ENCODE measurements at regions of chr1 and their contacts with region 1.

Region 1: GRCh38 chr1:54081306-54082270 is 28.2 kb downstream of the TCEANC2 start:
- DNase-seq: peak; percentile 33
- H3K4me3 Mint-ChIP-seq: no peak overlapping the region
- H3K27ac Mint-ChIP-seq: no peak overlapping the region
- H3K4me1 Mint-ChIP-seq: peaks cover 11% of the 10 kb centered on the region
- H3K27me3 Mint-ChIP-seq: no peaks in the 10 kb centered on the region

Region 2: GRCh38 chr1:53860967-53861411 is 220.6 kb before region 1 on chr1:
- intact Hi-C with region 1: loop called (anchors 1 kb)
- DNase-seq: peak; percentile 18
- H3K4me3 Mint-ChIP-seq: no peak overlapping the region
- H3K27ac Mint-ChIP-seq: no peak overlapping the region
- H3K4me1 Mint-ChIP-seq: no peaks in the 10 kb centered on the region
- H3K27me3 Mint-ChIP-seq: no peaks in the 10 kb centered on the region

Region 3: GRCh38 chr1:54070171-54070837 is 11.3 kb before region 1 on chr1:
- intact Hi-C with region 1: loop called (anchors 1 kb)
- DNase-seq: no peak
- H3K4me3 Mint-ChIP-seq: no peak overlapping the region
- H3K27ac Mint-ChIP-seq: no peak overlapping the region
- H3K4me1 Mint-ChIP-seq: no peaks in the 10 kb centered on the region
- H3K27me3 Mint-ChIP-seq: no peaks in the 10 kb centered on the region